ENCODE measurements at regions of chr4 and their contacts with region 1.

Region 1: GRCh38 chr4:86497980-86498862 is 95.9 kb upstream of the PTPN13 start:
- DNase-seq: peak; percentile 56
- H3K4me3 ChIP-seq: no peak overlapping the region
- H3K27ac ChIP-seq: no peak overlapping the region
- H3K4me1 ChIP-seq: no peaks in the 10 kb centered on the region
- H3K27me3 ChIP-seq: no peaks in the 10 kb centered on the region
- CTCF ChIP-seq: peak; percentile 58 to 76
- POLR2A ChIP-seq: no peak

Region 2: GRCh38 chr4:86152454-86152853 is 345.8 kb before region 1 on chr4:
- CTCF ChIA-PET with region 1: no interaction called
- POLR2A ChIA-PET with region 1: no interaction called
- dilution Hi-C with region 1: no loop called
- intact Hi-C with region 1: no loop called
- DNase-seq: no peak
- H3K4me3 ChIP-seq: no peak overlapping the region
- H3K27ac ChIP-seq: no peak overlapping the region
- H3K4me1 ChIP-seq: no peaks in the 10 kb centered on the region
- H3K27me3 ChIP-seq: peaks cover 0 to 4% of the 10 kb centered on the region in 2 experiments
- CTCF ChIP-seq: no peak
- POLR2A ChIP-seq: no peak

Region 3: DNA sequence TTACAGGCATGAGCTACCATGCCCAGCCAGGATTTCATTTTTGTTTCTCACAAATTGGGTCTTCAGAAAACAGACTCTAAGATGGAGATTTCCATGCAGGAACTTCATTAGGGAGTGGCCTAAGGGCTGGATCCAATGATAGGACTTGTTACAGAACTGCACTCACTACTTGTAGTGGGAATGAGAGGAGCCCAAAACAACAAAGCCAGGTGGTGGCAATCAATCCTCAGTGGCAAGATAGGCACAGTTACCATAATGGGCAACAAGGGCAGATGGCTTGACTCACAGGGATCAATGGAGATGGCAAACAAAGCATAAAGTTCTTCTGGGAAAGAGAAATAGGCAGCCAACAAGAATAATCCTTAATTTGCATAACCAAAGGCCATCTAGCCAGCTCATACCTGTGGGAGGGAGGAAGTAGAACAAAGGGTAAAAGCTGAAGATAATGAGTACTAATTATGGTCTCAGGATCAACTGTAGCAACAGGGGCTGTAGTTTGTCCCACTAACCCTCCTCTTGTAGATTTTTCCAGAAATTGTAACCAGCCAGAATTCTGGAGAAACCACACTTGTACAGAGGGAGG is 65.6 kb before region 1 on chr4:
- CTCF ChIA-PET with region 1: no interaction called
- POLR2A ChIA-PET with region 1: no interaction called
- dilution Hi-C with region 1: no loop called
- intact Hi-C with region 1: no loop called
- DNase-seq: no peak
- H3K4me3 ChIP-seq: no peak overlapping the region
- H3K27ac ChIP-seq: no peak overlapping the region
- H3K4me1 ChIP-seq: no peaks in the 10 kb centered on the region
- H3K27me3 ChIP-seq: no peaks in the 10 kb centered on the region
- CTCF ChIP-seq: no peak
- POLR2A ChIP-seq: no peak

Region 4: GRCh38 chr4:86487738-86488348 is 10.4 kb before region 1 on chr4:
- CTCF ChIA-PET with region 1: interaction called, 14 read pairs
- POLR2A ChIA-PET with region 1: no interaction called
- dilution Hi-C with region 1: no loop called
- intact Hi-C with region 1: no loop called
- DNase-seq: no peak
- H3K4me3 ChIP-seq: no peak overlapping the region
- H3K27ac ChIP-seq: no peak overlapping the region
- H3K4me1 ChIP-seq: no peaks in the 10 kb centered on the region
- H3K27me3 ChIP-seq: peaks cover 6% of the 10 kb centered on the region in 2 experiments
- CTCF ChIP-seq: no peak
- POLR2A ChIP-seq: no peak

Region 5: GRCh38 chr4:86522349-86522748 is 24.1 kb after region 1 on chr4:
- CTCF ChIA-PET with region 1: interaction called, 39 read pairs
- POLR2A ChIA-PET with region 1: no interaction called
- dilution Hi-C with region 1: no loop called
- intact Hi-C with region 1: no loop called
- DNase-seq: no peak
- H3K4me3 ChIP-seq: no peak overlapping the region
- H3K27ac ChIP-seq: no peak overlapping the region
- H3K4me1 ChIP-seq: no peaks in the 10 kb centered on the region
- H3K27me3 ChIP-seq: peaks cover 6 to 15% of the 10 kb centered on the region in 2 experiments
- CTCF ChIP-seq: no peak
- POLR2A ChIP-seq: no peak

Region 6: GRCh38 chr4:86557526-86557925 is 59.3 kb after region 1 on chr4:
- CTCF ChIA-PET with region 1: no interaction called
- POLR2A ChIA-PET with region 1: no interaction called
- dilution Hi-C with region 1: no loop called
- intact Hi-C with region 1: no loop called
- DNase-seq: peak; percentile 6
- H3K4me3 ChIP-seq: no peak overlapping the region
- H3K27ac ChIP-seq: no peak overlapping the region
- H3K4me1 ChIP-seq: peaks cover 6% of the 10 kb centered on the region
- H3K27me3 ChIP-seq: peaks cover 1 to 2% of the 10 kb centered on the region in 2 experiments
- CTCF ChIP-seq: no peak
- POLR2A ChIP-seq: no peak

Region 7: DNA sequence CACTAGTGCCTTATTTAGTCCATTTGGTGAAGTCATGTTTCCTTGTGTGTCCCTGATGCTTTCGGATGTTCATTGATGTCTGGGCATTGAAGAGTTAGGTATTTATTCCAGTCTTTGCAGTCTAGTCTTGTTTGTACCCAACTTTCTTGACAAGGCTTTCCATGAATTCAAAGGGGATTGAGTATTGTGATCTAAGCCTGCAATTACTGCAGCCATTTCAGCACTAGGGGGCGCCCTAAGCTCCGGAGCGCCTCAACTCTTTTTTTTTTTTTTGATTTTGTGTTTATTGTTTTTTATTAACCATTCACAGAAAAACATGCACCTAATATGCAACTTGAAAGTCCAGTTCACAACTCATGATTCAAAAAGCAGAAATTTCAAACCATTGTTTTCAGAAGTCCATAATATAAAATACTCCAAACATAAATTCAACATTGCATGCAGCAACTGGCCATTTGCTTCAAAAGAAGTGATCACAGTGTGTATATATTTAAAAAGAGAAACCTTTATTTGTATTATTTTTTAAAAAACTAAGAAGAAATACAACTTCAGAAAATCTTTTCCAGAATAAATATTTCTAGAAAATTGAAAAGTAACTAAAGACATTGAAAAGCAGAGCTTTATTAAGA is 155.1 kb after region 1 on chr4:
- CTCF ChIA-PET with region 1: interaction called, 7 read pairs
- POLR2A ChIA-PET with region 1: no interaction called
- dilution Hi-C with region 1: no loop called
- intact Hi-C with region 1: loop called (anchors 2 kb)
- DNase-seq: peak; percentile 21
- H3K4me3 ChIP-seq: no peak overlapping the region
- H3K27ac ChIP-seq: no peak overlapping the region
- H3K4me1 ChIP-seq: no peaks in the 10 kb centered on the region
- H3K27me3 ChIP-seq: no peaks in the 10 kb centered on the region
- CTCF ChIP-seq: peak; percentile 52 to 73
- POLR2A ChIP-seq: no peak

Region 8: DNA sequence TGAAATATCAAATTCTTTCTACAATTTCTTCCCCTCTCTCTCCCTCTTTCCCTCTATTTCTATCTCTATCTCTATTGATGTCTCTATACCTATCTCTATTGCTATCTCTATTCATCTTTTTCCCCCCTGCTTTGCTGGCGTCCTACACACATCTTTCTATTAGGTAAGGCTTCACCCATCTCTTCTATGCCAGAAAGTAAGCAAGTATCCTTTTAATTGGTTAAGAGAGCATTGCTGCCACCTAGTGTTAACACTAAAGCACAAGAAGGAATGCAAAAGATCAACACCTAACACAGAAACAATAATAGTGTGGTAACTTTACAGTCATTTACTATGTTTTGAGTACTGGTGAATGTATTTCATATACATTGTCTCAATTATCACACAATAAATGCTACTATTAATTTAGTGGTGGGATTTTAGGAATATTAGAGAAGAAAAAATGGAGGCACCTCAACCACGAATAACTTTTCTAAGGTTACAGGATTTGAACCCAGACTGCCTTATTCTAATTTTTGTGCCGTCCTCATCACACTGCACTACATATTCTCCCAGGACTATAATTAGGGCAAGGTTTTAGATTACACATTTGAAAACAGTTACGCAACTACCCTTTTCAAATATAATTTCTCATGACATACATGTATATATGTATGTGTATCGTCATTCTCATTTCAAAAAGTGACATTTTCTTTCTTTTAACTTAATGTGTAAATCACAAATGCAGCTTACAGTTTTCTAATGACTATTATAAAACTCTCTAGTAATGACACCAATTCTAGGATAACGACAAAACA is 397.7 kb after region 1 on chr4:
- CTCF ChIA-PET with region 1: interaction called, 133 read pairs
- POLR2A ChIA-PET with region 1: interaction called, 6 read pairs
- dilution Hi-C with region 1: no loop called
- intact Hi-C with region 1: loop called (anchors 1 kb)
- DNase-seq: peak; percentile 72
- H3K4me3 ChIP-seq: no peak overlapping the region
- H3K27ac ChIP-seq: no peak overlapping the region
- H3K4me1 ChIP-seq: peaks cover 16% of the 10 kb centered on the region
- H3K27me3 ChIP-seq: no peaks in the 10 kb centered on the region
- CTCF ChIP-seq: peak; percentile 46 to 52
- POLR2A ChIP-seq: no peak

Region 9: DNA sequence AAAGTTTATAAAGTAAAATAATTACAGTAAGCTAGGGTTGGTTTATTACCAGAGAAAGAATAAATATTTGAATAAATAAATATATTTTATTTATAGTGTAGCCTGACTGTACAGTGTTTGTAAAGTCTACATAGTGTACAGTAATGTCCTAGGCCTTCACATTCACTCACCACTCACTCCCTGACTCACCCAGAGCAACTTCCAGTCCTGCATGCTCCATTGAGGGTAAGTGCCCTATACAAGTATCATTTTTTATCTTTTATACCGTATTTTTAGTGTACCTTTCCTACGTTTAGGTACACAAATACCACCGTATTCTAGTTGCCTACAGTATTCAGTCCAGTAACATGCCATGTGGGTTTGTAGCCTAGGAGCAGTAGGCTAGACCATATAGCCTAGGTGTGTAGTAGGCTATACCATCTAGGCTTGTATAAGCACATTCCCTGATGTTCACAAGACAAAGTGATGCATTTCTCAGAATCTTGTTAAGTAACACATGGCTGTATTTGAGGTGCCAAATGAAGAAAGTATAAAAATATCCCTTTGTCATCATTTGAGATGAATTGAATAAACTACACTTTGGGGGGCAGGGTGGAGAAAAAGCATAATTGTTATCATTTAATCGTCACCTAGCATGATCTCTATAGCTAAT is 736.9 kb after region 1 on chr4:
- CTCF ChIA-PET with region 1: interaction called, 9 read pairs
- POLR2A ChIA-PET with region 1: no interaction called
- dilution Hi-C with region 1: no loop called
- intact Hi-C with region 1: loop called (anchors 2 kb)
- DNase-seq: no peak
- H3K4me3 ChIP-seq: peak overlapping the region in 2 of 3 experiments; percentile 74 to 96
- H3K27ac ChIP-seq: no peak overlapping the region
- H3K4me1 ChIP-seq: peaks cover 2% of the 10 kb centered on the region
- H3K27me3 ChIP-seq: peaks cover 0 to 6% of the 10 kb centered on the region in 2 experiments
- CTCF ChIP-seq: no peak
- POLR2A ChIP-seq: no peak

Region 10: GRCh38 chr4:87620491-87620890 is 1122.3 kb after region 1 on chr4:
- CTCF ChIA-PET with region 1: no interaction called
- POLR2A ChIA-PET with region 1: no interaction called
- dilution Hi-C with region 1: no loop called
- intact Hi-C with region 1: no loop called
- DNase-seq: no peak
- H3K4me3 ChIP-seq: no peak overlapping the region
- H3K27ac ChIP-seq: no peak overlapping the region
- H3K4me1 ChIP-seq: no peaks in the 10 kb centered on the region
- H3K27me3 ChIP-seq: peaks cover 2 to 9% of the 10 kb centered on the region in 2 experiments
- CTCF ChIP-seq: no peak
- POLR2A ChIP-seq: no peak

Measured in endothelial cell of umbilical vein (primary cell).